Psoas muscle (tissue), 8 donors: ENCODE measurements at regions of chr13 and their contacts with region 1.

Region 1: GRCh38 chr13:66751691-66752090 is 478.4 kb downstream of the PCDH9 start:
- DNase-seq: no peak
- ATAC-seq: no peak
- H3K4me3 ChIP-seq: no peak overlapping the region
- H3K27ac ChIP-seq: no peak overlapping the region
- H3K4me1 ChIP-seq: no peaks in the 10 kb centered on the region
- H3K27me3 ChIP-seq: no peaks in the 10 kb centered on the region
- CTCF ChIP-seq: no peak

Region 2: GRCh38 chr13:66681403-66681802 is 70.3 kb before region 1 on chr13:
- intact Hi-C with region 1: no loop called
- DNase-seq: no peak
- ATAC-seq: no peak
- H3K4me3 ChIP-seq: no peak overlapping the region
- H3K27ac ChIP-seq: no peak overlapping the region
- H3K4me1 ChIP-seq: no peaks in the 10 kb centered on the region
- H3K27me3 ChIP-seq: no peaks in the 10 kb centered on the region
- CTCF ChIP-seq: no peak

Region 3: GRCh38 chr13:66780814-66781213 is 29.1 kb after region 1 on chr13:
- intact Hi-C with region 1: loop called in 1 of 2 experiments (anchors 1 kb)
- DNase-seq: no peak
- ATAC-seq: no peak
- H3K4me3 ChIP-seq: no peak overlapping the region
- H3K27ac ChIP-seq: no peak overlapping the region
- H3K4me1 ChIP-seq: no peaks in the 10 kb centered on the region
- H3K27me3 ChIP-seq: no peaks in the 10 kb centered on the region
- CTCF ChIP-seq: no peak